MCF 10A (cell line): ENCODE measurements at regions of chr16 and their contacts with region 1.

Region 1: GRCh38 chr16:9134739-9135138 is 43.3 kb downstream of the HAPSTR1 start:
- DNase-seq: peak; percentile 69
- H3K4me3 Mint-ChIP-seq: no peak overlapping the region
- H3K27ac Mint-ChIP-seq: no peak overlapping the region
- H3K4me1 Mint-ChIP-seq: peaks cover 11% of the 10 kb centered on the region
- H3K27me3 Mint-ChIP-seq: peaks cover 14% of the 10 kb centered on the region
- CTCF ChIP-seq: peak; percentile 76

Region 2: DNA sequence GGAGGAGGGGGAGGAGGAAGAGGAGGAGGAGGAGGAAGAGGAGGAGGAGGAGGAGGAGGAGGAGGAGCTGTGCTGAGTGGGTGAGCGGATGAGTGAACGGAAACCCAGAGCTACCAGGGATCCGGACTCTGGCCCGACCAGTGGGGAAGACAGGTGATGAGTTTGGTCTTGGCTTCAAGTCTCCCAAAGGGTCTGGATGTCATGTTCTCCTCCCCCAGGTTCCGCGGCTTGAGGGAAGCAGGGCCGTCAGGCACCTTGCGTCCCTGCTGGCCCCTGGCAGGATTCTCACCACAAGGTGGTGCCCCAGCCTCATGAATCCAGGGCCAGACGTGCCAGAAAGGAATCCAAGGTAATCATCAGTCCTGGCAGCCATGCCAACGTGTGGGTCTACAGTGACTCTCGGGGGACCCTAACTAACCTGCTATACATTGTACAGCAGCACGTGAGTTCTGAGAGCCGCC is 473.9 kb before region 1 on chr16:
- CTCF ChIA-PET with region 1: no interaction called
- POLR2A ChIA-PET with region 1: no interaction called
- intact Hi-C with region 1: loop called (anchors 2 kb)
- DNase-seq: peak; percentile 75
- H3K4me3 Mint-ChIP-seq: no peak overlapping the region
- H3K27ac Mint-ChIP-seq: no peak overlapping the region
- H3K4me1 Mint-ChIP-seq: no peaks in the 10 kb centered on the region
- H3K27me3 Mint-ChIP-seq: no peaks in the 10 kb centered on the region
- CTCF ChIP-seq: peak; percentile 82

Region 3: DNA sequence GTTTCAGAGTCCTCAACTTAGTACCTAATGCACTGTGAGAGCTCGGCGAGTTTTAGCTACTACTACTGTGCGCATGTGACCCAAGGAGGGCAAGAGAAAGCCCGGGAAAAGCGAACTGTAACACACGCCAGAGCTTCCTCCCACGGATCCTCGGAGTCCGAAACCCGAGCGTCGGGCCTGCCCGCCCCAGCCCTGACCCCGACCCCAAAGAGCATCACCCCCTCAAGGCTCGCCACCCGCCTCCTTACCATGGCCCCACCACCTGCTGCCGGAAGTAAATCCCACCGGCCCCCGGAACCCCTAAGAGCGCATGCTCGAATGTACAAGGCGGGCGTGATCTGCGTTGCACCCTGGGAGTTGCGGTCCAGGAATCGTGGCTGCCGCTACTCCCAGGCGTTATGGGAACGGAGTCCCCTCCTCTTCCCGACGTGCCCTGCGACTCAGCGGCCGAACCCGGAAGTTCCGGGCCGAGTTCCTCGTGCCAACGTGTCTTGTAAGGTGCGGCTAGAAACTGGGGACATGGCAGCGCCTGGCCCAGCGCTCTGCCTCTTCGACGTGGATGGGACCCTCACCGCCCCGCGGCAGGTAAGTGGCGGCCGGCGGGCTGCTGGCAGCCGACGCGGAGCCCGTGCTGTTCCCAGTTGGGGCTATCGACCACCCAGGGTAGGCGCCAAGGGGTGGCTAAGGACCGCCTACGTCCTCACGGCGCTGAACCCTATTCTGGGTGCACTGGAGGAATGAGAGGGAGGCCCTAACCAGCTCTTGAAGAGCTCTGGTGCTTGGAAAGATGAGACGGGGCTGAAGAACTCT is 337.2 kb before region 1 on chr16 and contains the starts of genes PMM2 and TMEM186:
- CTCF ChIA-PET with region 1: no interaction called
- POLR2A ChIA-PET with region 1: no interaction called
- intact Hi-C with region 1: loop called (anchors 10 kb)
- DNase-seq: peak; percentile 96
- H3K4me3 Mint-ChIP-seq: peak within 1 kb of the TSS; percentile 92
- H3K27ac Mint-ChIP-seq: peak within 1 kb of the TSS; percentile 97
- H3K4me1 Mint-ChIP-seq: peaks cover 9% of the 10 kb centered on the region
- H3K27me3 Mint-ChIP-seq: no peaks in the 10 kb centered on the region
- CTCF ChIP-seq: no peak
- total RNA-seq, gene PMM2: 59.4 and 60.6 TPM in 2 replicates
- total RNA-seq, gene TMEM186: 12.9 and 13.9 TPM in 2 replicates

Region 4: DNA sequence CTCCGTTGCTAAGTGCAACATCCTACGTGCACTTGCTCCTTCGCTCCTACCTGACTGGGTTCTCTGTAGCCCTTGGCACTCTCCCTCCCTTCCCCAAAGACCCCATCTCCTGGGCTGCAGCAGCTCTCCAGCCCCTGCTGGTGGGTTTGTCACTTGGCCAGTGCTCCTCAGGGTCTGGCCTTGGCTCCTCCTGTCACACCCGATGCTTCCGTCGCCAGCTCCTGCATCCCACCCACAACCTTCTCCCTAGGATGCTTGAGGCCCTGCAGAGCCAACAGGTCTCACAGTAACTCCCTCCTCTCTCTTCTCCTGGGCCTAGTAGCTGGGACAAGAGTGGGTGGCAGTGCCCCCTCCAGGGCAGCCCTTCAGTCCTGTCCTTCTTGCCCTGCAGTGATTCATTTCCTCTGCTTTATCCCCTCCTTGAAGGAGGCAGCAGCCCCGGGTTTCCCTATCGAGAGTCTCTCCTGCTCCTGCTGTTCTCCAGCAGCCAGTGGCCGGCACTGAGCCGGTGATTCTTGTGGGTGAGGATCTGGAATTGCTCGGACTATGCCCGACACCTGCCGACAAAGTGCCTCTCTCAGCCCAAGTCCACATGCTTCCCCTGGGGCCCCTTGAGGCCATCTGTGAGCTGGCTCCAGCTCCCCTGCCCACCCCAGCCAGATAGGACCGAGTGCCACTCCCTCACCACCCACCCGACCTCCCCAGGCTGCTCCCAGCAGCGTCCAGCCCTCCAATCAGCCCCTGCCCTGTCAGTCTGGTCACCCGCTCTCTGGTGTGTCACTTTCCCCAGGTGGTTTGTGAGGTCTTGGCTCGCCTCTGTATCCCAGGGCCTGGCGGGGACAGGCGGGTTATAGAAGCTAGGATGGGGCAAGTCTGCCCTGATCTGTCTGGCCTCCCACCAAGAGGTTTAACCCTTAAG is 248.8 kb before region 1 on chr16:
- CTCF ChIA-PET with region 1: no interaction called
- POLR2A ChIA-PET with region 1: no interaction called
- intact Hi-C with region 1: loop called (anchors 10 kb)
- DNase-seq: peak; percentile 50
- H3K4me3 Mint-ChIP-seq: no peak overlapping the region
- H3K27ac Mint-ChIP-seq: no peak overlapping the region
- H3K4me1 Mint-ChIP-seq: peaks cover 23% of the 10 kb centered on the region
- H3K27me3 Mint-ChIP-seq: no peaks in the 10 kb centered on the region
- CTCF ChIP-seq: no peak

Region 5: DNA sequence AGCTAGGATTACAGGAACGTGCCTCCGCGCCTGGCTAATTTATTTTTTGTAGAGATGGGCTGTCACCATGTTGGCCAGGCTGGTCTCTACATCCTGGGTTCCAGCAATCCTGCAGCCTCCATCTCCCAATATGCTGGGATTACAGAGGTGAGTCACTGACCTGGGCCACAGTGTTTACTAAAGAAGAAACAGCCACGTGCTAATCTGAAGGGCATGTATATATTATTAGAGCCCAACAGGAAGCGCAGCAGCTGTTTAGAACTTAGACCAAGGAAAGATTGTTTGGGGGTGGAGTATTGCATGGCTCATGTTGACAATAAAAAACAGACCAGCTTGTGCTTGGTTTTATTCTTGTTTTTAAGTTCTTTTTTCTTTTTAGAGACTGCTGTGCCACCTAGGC is 16.9 kb after region 1 on chr16:
- CTCF ChIA-PET with region 1: interaction called, 24 read pairs
- POLR2A ChIA-PET with region 1: no interaction called
- intact Hi-C with region 1: no loop called
- DNase-seq: no peak
- H3K4me3 Mint-ChIP-seq: no peak overlapping the region
- H3K27ac Mint-ChIP-seq: no peak overlapping the region
- H3K4me1 Mint-ChIP-seq: no peaks in the 10 kb centered on the region
- H3K27me3 Mint-ChIP-seq: no peaks in the 10 kb centered on the region
- CTCF ChIP-seq: no peak